Tibial artery (tissue), 4 donors: ENCODE measurements at regions of chr1 and their contacts with region 1.

Region 1: DNA sequence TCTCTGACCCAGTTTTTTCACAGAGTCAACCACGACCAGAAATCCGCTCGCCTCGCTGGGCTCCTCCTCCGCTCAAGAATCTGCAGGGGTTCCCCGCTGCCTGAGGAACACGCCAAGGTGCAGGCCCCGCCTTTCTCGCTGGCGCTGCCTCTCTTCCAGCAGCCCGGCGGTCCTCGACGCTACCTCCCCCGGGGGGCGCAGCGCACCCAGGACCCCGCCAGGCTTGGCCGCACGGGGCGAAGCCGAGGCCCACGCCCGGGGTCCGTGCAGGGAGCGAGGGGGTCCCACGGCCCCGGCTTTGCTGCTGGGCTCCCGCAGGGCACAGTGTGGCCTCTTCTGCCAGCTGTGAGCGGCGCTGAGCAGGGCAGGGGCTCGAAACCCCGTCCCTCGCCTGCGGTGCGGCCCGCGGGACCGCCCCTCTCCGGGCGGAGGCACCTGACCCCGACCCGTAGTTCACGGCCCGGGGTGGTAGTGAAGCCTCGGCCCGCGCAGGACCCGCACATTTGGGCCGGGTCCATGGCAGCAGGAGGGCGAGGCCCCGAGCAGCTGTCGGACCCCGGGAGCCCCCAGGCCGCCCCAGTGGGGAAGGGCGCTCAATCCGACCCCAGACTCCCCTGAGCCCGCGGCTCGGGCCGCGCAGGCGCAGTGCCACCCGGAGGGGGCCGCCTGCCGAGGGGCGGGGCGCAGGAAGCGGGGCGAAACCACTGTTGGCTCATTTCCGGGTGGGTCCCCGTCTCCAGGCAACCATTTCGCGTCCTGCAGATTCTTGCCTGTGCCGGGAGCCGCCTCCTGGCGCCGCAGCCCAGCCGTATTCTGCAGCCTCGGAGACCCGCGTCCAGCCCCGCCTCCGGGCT is 10.0 kb upstream of the MMEL1 start:
- DNase-seq: peak; percentile 86 to 93
- H3K4me3 ChIP-seq: peak overlapping the region; percentile 73 to 88
- H3K27ac ChIP-seq: peak overlapping the region; percentile 75 to 77
- H3K4me1 ChIP-seq: peaks cover 0 to 33% (median 18%) of the 10 kb centered on the region in 4 donors
- H3K27me3 ChIP-seq: peaks cover 0 to 16% of the 10 kb centered on the region in 2 donors
- CTCF ChIP-seq: no peak

Region 2: GRCh38 chr1:1387098-1388077 is 1255.4 kb before region 1 on chr1:
- intact Hi-C with region 1: no loop called
- DNase-seq: no peak
- H3K4me3 ChIP-seq: no peak overlapping the region
- H3K27ac ChIP-seq: no peak overlapping the region
- H3K4me1 ChIP-seq: no peaks in the 10 kb centered on the region
- H3K27me3 ChIP-seq: no peaks in the 10 kb centered on the region
- CTCF ChIP-seq: no peak

Region 3: GRCh38 chr1:2575801-2576663 is 66.8 kb before region 1 on chr1:
- intact Hi-C with region 1: no loop called
- DNase-seq: no peak
- H3K4me3 ChIP-seq: no peak overlapping the region
- H3K27ac ChIP-seq: no peak overlapping the region
- H3K4me1 ChIP-seq: peaks cover 0 to 8% (median 0%) of the 10 kb centered on the region in 4 donors
- H3K27me3 ChIP-seq: peaks cover 0 to 35% of the 10 kb centered on the region in 2 donors
- CTCF ChIP-seq: no peak

Region 4: DNA sequence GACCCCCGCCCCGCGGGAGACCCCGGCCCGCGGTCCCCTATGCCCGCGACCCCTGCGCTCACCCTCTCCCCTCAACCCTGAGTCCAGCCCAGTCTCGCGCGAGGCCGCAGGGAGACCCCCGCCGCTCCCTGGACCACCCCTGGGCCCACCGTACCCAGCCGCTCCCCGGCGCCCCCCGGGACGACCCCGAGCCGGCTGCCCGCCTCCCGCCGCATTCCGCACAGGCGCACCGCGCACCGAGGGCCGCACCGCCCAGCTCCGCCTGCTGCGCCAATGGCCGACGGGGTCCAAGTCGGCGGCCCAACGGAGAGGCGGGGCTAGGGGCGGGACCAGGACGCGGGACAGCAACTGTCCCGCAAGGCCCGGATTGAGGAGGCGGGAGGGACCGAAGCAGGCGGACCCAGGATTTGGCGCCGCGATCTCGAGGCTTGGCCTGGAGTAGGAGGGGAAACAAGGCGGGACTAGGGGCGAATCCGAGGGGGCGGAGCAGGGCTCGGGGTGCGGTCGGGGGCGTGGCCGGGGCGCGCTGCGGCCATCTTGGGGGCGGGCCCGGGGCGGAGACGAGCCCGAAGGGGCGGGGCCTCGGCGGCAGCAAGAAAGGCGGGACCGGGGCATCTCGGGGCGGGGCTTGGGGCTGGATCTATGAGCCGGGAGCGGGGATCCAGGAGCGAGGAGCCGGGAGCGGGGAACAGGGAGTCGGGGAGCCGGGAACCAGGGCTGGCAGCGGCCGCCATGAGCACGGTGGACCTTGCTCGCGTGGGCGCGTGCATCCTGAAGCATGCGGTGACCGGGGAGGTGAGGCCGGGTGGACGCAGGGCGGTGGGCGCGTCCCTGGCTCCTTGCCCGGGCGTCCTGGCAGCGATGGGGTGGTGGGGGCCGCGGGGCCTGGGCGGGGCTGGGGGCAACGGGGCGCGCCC is 56.4 kb before region 1 on chr1 and contains the start of gene PRXL2B:
- intact Hi-C with region 1: loop called (anchors 2 kb)
- DNase-seq: peak; percentile 99 to 100
- H3K4me3 ChIP-seq: peak within 1 kb of the TSS; percentile 93 to 98
- H3K27ac ChIP-seq: peak within 1 kb of the TSS; percentile 91 to 98
- H3K4me1 ChIP-seq: peaks cover 5 to 37% (median 19%) of the 10 kb centered on the region in 4 donors
- H3K27me3 ChIP-seq: peaks cover 0 to 13% of the 10 kb centered on the region in 2 donors
- CTCF ChIP-seq: no peak

Region 5: GRCh38 chr1:2623571-2624337 is 19.0 kb before region 1 on chr1:
- intact Hi-C with region 1: no loop called
- DNase-seq: no peak
- H3K4me3 ChIP-seq: no peak overlapping the region
- H3K27ac ChIP-seq: no peak overlapping the region
- H3K4me1 ChIP-seq: peaks cover 0 to 8% (median 2%) of the 10 kb centered on the region in 4 donors
- H3K27me3 ChIP-seq: peaks cover 0 to 52% of the 10 kb centered on the region in 2 donors
- CTCF ChIP-seq: no peak